ENCODE measurements at regions of chr6 and their contacts with region 1.

Region 1: DNA sequence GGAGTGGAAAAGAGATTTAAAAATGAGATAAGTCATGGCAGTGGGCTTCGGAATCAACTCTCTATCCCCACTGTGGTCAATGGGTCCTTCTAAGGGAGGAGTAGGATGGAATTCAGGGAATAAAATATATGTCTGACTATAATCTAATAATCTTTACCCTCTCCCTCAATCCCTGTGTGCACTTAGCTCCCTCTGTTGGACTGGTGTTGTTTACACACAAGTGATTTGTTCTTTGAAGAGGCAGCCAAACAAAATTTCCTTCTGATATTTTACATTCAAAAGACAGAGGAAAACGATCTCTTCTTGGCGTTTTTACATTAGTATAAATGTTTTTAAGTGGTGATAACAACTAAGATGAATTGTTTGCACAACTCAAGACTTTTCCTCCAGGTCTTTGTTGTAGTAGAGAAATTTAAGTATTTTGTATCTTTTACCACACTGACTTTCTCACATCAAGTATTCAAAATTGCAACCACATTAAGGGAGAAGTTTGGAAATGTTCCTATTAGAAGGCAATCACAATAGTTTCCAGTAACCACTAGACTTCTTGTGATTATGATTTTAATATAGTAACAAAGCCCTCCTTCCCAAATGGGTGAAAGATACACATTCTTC is 317.8 kb downstream of the CENPW start:
- DNase-seq: peak; percentile 32
- H3K4me3 ChIP-seq: no peak overlapping the region
- H3K27ac ChIP-seq: no peak overlapping the region
- H3K4me1 ChIP-seq: no peaks in the 10 kb centered on the region
- H3K27me3 ChIP-seq: no peaks in the 10 kb centered on the region
- CTCF ChIP-seq: peak; percentile 57 to 74

Region 2: GRCh38 chr6:125995972-125996580 is 661.6 kb before region 1 on chr6:
- CTCF ChIA-PET with region 1: no interaction called
- dilution Hi-C with region 1: no loop called
- in situ Hi-C with region 1: no loop called
- intact Hi-C with region 1: loop called (anchors 2 kb)
- DNase-seq: peak; percentile 64
- H3K4me3 ChIP-seq: peak overlapping the region; percentile 25 to 29 (median 26)
- H3K27ac ChIP-seq: no peak overlapping the region
- H3K4me1 ChIP-seq: no peaks in the 10 kb centered on the region
- H3K27me3 ChIP-seq: no peaks in the 10 kb centered on the region
- CTCF ChIP-seq: peak; percentile 96 to 98

Region 3: DNA sequence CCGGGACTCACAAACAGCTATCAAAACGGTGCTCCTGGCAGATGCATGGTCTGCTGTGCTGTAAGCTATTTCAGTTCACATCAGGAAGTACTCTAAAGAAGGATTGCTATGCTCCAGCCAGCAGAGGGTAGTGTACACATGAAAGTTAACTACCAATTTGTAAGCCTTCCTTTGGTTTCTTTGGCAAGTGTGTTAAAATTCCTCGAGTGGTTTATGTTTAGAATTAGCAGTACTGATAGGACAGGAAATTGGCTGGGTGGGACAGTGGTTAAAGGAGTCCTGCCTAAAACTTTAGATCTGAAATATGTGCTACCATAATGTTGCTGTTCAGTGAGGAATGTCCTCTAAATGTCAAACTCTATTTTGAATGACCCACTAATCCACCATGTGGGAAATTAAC is 624.0 kb before region 1 on chr6:
- CTCF ChIA-PET with region 1: no interaction called
- dilution Hi-C with region 1: no loop called
- in situ Hi-C with region 1: no loop called
- intact Hi-C with region 1: loop called (anchors 1 kb)
- DNase-seq: peak; percentile 58
- H3K4me3 ChIP-seq: no peak overlapping the region
- H3K27ac ChIP-seq: no peak overlapping the region
- H3K4me1 ChIP-seq: peaks cover 3% of the 10 kb centered on the region
- H3K27me3 ChIP-seq: no peaks in the 10 kb centered on the region
- CTCF ChIP-seq: peak; percentile 57 to 66

Region 4: GRCh38 chr6:126176282-126176681 is 481.4 kb before region 1 on chr6:
- CTCF ChIA-PET with region 1: interaction called, 3 read pairs
- dilution Hi-C with region 1: no loop called
- in situ Hi-C with region 1: no loop called
- intact Hi-C with region 1: loop called (anchors 1 kb)
- DNase-seq: peak; percentile 44
- H3K4me3 ChIP-seq: no peak overlapping the region
- H3K27ac ChIP-seq: no peak overlapping the region
- H3K4me1 ChIP-seq: peaks cover 8% of the 10 kb centered on the region
- H3K27me3 ChIP-seq: no peaks in the 10 kb centered on the region
- CTCF ChIP-seq: peak; percentile 41 to 55

Region 5: GRCh38 chr6:126361832-126362412 is 295.7 kb before region 1 on chr6:
- CTCF ChIA-PET with region 1: interaction called, 4 read pairs
- dilution Hi-C with region 1: no loop called
- in situ Hi-C with region 1: no loop called
- intact Hi-C with region 1: loop called (anchors 1 kb)
- DNase-seq: no peak
- H3K4me3 ChIP-seq: no peak overlapping the region
- H3K27ac ChIP-seq: no peak overlapping the region
- H3K4me1 ChIP-seq: no peaks in the 10 kb centered on the region
- H3K27me3 ChIP-seq: no peaks in the 10 kb centered on the region
- CTCF ChIP-seq: no peak